ENCODE measurements at regions of chr3 and their contacts with region 1.

Region 1: DNA sequence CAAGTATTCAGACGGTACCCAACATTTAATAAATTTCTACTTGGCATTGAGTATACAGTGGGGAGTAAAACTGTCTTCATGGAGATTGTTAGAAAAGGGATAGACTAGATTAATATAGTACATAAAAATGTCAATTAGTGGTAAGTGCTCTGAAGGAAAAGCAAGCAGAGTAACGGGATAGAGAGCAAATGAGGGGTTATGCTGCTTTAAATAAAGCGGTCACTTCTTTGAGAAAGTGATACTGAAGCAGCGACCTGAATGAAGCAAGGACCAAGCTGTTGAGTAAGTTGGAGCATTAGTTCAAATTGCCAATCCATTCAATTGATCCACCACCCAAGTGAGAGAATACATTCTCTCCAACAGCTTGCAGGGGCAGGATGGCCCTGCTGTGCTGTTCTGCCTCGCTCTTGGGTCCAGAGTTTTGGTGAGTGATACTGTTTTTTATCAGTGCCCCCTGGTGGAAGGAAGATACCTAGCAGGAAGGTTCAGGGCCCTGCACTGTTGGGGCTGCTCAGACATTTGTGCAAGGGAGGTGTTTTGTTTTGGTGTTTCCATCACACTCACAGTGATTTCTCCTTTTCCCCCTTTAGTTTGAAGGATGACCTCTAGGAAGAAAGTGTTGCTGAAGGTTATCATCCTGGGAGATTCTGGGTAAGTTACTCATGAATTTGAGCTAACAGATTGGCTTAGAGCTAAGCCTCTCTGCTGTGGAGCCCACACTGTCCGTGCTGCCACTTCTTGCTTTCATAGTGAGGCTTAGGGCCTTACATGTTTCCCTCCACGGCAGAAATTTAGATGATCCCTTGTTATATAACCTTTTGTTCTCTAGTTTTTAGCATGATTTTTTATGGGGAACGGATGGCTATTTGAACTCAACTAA is 69.0 kb downstream of the RAB7A start:
- DNase-seq: peak; percentile 32 to 85 (median 64)
- ATAC-seq: peak; percentile 99
- H3K4me3 ChIP-seq: no peak overlapping the region
- H3K4me3 Mint-ChIP-seq: peak overlapping the region; percentile 9
- H3K27ac ChIP-seq: peak overlapping the region in 1 of 2 experiments; percentile 17
- H3K27ac Mint-ChIP-seq: peak overlapping the region; percentile 80
- H3K4me1 ChIP-seq: peaks cover 44% of the 10 kb centered on the region
- H3K4me1 Mint-ChIP-seq: peaks cover 55% of the 10 kb centered on the region
- H3K27me3 ChIP-seq: no peaks in the 10 kb centered on the region
- H3K27me3 Mint-ChIP-seq: no peaks in the 10 kb centered on the region
- CTCF ChIP-seq: peak; percentile 81

Region 2: DNA sequence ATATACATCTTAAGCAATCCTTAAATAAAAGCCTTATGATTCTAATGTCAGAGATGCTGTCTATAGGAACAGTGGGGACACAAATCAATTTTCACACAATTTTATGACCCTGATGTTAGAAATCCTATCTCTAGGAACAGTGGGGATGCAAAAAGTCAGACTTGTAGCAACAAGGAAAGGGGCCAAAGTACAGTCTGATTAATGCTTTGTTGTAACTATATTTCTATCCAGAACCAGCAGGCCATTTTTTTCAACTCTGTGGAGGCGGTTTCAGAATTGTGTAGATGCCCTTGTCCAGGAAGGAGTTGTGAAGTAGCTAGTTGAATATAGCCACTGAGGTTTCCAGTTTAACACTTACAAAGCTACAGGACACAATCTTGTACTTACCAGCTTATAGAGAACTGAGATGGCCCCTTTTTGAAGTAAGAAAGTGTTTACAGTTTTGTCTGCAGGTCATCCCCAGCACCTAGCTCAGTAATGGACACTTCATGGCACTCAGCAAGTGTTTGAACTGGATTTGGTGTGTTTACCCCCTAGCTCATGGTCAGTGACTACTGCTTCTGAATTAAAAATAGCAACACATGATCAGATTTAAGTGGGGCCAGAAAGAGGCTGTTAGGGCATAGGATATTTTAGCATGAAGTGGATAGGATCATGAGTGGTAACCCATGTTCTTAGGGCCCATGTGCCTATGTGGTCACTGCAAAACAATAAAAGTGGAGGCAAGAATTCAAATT is 14.7 kb before region 1 on chr3:
- CTCF ChIA-PET with region 1: interaction called, 28 read pairs
- POLR2A ChIA-PET with region 1: no interaction called
- intact Hi-C with region 1: loop called (anchors 1 kb)
- DNase-seq: no peak
- ATAC-seq: no peak
- H3K4me3 ChIP-seq: no peak overlapping the region
- H3K4me3 Mint-ChIP-seq: no peak overlapping the region
- H3K27ac ChIP-seq: no peak overlapping the region
- H3K27ac Mint-ChIP-seq: peak overlapping the region; percentile 78
- H3K4me1 ChIP-seq: peaks cover 34% of the 10 kb centered on the region
- H3K4me1 Mint-ChIP-seq: peaks cover 84% of the 10 kb centered on the region
- H3K27me3 ChIP-seq: no peaks in the 10 kb centered on the region
- H3K27me3 Mint-ChIP-seq: no peaks in the 10 kb centered on the region
- CTCF ChIP-seq: no peak

Region 3: GRCh38 chr3:128922804-128923459 is 127.9 kb after region 1 on chr3:
- CTCF ChIA-PET with region 1: interaction called, 5 read pairs
- POLR2A ChIA-PET with region 1: no interaction called
- intact Hi-C with region 1: loop called in 1 of 2 experiments (anchors 5 kb)
- DNase-seq: peak; percentile 16 to 83 (median 58)
- ATAC-seq: peak; percentile 85
- H3K4me3 ChIP-seq: peak overlapping the region; percentile 34 to 37
- H3K4me3 Mint-ChIP-seq: peak overlapping the region; percentile 84
- H3K27ac ChIP-seq: peak overlapping the region; percentile 34 to 52
- H3K27ac Mint-ChIP-seq: peak overlapping the region; percentile 90
- H3K4me1 ChIP-seq: peaks cover 19% of the 10 kb centered on the region
- H3K4me1 Mint-ChIP-seq: peaks cover 36% of the 10 kb centered on the region
- H3K27me3 ChIP-seq: no peaks in the 10 kb centered on the region
- H3K27me3 Mint-ChIP-seq: no peaks in the 10 kb centered on the region
- CTCF ChIP-seq: no peak